PC-3 (cell line): ENCODE measurements at regions of chr7 and their contacts with region 1.

Region 1: DNA sequence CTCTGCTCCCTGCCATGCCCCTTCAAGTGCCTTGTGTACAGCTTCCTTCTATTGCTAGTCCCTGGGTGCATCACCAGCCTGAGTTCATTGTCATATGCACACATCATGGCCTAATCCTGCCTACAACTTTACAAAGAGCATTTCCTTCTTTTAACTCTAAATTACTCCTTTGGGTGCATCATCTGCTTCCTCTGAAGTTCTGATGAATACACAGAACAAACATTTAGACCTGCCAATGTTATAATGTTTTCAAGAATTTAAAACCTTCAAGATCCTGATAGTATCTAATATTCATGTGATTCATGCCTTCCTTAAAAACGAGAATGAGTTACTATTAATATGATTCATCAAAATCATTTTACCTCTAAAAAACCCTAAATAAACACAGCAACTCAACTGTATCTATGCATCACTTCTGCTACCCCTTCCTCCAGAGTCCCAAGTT is 357.1 kb downstream of the MAGI2 start:
- DNase-seq: peak; percentile 89
- ATAC-seq: peak; percentile 97
- H3K4me3 ChIP-seq: no peak overlapping the region
- H3K27ac ChIP-seq: peak overlapping the region; percentile 87
- H3K4me1 ChIP-seq: peaks cover 21% of the 10 kb centered on the region
- H3K27me3 ChIP-seq: no peaks in the 10 kb centered on the region
- CTCF ChIP-seq: no peak

Region 2: GRCh38 chr7:78779788-78780187 is 316.6 kb before region 1 on chr7:
- CTCF ChIA-PET with region 1: no interaction called
- POLR2A ChIA-PET with region 1: no interaction called
- intact Hi-C with region 1: no loop called
- DNase-seq: no peak
- ATAC-seq: no peak
- H3K4me3 ChIP-seq: no peak overlapping the region
- H3K27ac ChIP-seq: no peak overlapping the region
- H3K4me1 ChIP-seq: peaks cover 7% of the 10 kb centered on the region
- H3K27me3 ChIP-seq: peaks cover 11% of the 10 kb centered on the region; the same call in 1 of the 2 replicates
- CTCF ChIP-seq: peak; percentile 44

Region 3: GRCh38 chr7:78959477-78959876 is 136.9 kb before region 1 on chr7:
- CTCF ChIA-PET with region 1: no interaction called
- POLR2A ChIA-PET with region 1: no interaction called
- intact Hi-C with region 1: loop called (anchors 1 kb)
- DNase-seq: peak; percentile 92
- ATAC-seq: peak; percentile 87
- H3K4me3 ChIP-seq: no peak overlapping the region
- H3K27ac ChIP-seq: peak overlapping the region; percentile 86
- H3K4me1 ChIP-seq: peaks cover 38% of the 10 kb centered on the region
- H3K27me3 ChIP-seq: no peaks in the 10 kb centered on the region
- CTCF ChIP-seq: no peak

Region 4: DNA sequence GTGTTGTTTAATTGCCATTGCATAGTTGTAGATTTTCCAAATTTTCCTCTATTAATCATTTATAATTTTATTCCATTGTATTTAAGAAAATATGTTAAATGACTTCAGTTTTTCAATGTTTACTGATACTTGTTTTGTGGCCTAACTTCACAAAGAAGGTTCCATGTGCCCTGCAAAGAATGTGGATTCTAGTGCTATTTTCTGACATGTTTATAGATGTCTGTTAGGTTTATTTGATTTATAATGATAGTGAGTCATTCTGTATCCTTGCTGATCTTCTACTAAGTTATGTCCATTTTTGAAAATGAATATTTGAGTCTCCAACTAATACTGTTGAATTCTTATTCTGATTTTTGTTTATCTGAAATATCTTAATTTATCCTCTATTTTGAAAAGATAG is 12.0 kb before region 1 on chr7:
- CTCF ChIA-PET with region 1: no interaction called
- POLR2A ChIA-PET with region 1: no interaction called
- intact Hi-C with region 1: loop called (anchors 1 kb)
- DNase-seq: peak; percentile 54
- ATAC-seq: peak; percentile 89
- H3K4me3 ChIP-seq: no peak overlapping the region
- H3K27ac ChIP-seq: no peak overlapping the region
- H3K4me1 ChIP-seq: peaks cover 12% of the 10 kb centered on the region
- H3K27me3 ChIP-seq: no peaks in the 10 kb centered on the region
- CTCF ChIP-seq: no peak

Region 5: DNA sequence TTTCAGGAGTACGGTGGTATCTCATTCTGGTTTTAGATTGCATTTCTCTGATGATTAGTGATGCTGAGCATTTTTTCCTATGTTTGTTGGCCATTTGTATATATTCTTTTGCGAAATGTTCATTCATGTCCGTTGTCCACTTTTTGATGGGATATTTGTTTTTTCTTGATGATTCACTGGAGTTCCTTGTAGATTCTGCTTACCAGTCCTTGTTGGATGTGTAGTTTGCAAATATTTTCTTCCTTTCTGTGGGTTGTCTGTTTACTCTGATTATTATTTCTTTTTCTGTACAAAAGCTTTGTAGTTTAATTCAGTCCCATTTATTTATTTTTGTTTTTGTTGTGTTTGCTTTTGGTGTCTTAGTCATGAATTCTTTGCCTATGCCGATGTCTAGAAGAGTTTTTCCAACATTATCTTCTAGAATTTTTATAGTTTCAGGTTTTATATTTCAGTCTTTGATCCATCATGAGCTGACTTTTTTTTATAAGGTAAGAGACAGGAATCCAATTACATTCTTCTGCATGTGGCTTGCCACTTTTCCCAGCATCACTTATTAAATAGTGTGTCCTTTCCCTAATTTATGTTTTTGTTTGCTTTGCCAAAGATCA is 36.6 kb after region 1 on chr7:
- CTCF ChIA-PET with region 1: no interaction called
- POLR2A ChIA-PET with region 1: no interaction called
- intact Hi-C with region 1: loop called (anchors 1 kb)
- DNase-seq: peak; percentile 76
- ATAC-seq: peak; percentile 93
- H3K4me3 ChIP-seq: no peak overlapping the region
- H3K27ac ChIP-seq: peak overlapping the region; percentile 33
- H3K4me1 ChIP-seq: peaks cover 19% of the 10 kb centered on the region
- H3K27me3 ChIP-seq: no peaks in the 10 kb centered on the region
- CTCF ChIP-seq: no peak

Region 6: DNA sequence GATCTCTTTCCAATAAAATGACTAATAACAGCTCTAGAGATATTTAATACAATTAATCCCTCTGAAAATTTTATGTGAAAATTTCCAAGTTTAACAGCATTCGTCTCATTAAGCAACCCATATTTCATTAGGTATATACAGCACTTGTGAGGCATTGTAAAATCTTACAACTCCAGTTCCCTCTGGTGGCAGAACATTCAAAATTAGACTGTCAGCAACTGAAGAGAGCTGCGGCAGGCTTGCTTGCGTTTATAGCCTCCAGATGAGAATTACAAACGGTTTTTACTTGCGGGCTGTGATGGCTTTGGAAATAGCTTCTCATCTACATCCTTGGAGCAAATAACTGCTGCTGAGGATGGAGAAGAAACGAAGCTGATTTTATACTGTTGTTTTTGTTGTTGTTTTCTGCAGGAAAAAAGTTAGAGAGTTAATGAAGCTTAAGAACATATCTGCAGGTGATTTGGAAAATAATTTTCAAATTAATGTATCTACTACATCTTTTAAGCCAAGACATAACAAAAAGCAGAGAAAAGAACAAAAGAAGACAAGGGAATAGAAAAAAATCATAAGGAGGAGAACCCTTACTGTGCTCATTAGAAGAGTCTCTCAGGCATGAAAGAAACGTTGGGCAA is 185.8 kb after region 1 on chr7:
- CTCF ChIA-PET with region 1: no interaction called
- POLR2A ChIA-PET with region 1: no interaction called
- intact Hi-C with region 1: loop called (anchors 5 kb)
- DNase-seq: peak; percentile 71
- ATAC-seq: peak; percentile 70
- H3K4me3 ChIP-seq: peak overlapping the region; percentile 10
- H3K27ac ChIP-seq: peak overlapping the region; percentile 67
- H3K4me1 ChIP-seq: peaks cover 45% of the 10 kb centered on the region
- H3K27me3 ChIP-seq: no peaks in the 10 kb centered on the region
- CTCF ChIP-seq: peak; percentile 62

Region 7: DNA sequence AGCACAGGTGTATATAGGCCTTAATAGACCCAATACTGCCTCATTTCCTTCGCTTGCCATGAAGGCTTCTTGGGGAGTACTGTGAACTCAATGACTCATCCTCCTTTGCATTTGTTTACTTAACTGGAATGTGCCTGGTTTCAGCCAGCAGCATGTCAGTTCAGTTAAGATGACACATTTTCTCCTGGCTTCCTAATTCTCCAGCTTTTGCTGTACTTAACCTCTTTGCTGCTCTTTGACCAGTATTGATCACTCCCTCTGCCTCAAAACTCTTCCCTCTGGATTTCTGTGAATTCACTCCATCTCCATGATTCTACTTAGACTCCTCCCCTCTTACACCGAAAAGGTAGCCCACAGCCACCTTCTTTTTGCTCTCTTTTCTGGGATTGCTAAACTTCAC is 221.3 kb after region 1 on chr7:
- CTCF ChIA-PET with region 1: no interaction called
- POLR2A ChIA-PET with region 1: no interaction called
- intact Hi-C with region 1: no loop called
- DNase-seq: peak; percentile 92
- ATAC-seq: peak; percentile 100
- H3K4me3 ChIP-seq: no peak overlapping the region
- H3K27ac ChIP-seq: peak overlapping the region; percentile 64
- H3K4me1 ChIP-seq: peaks cover 14% of the 10 kb centered on the region
- H3K27me3 ChIP-seq: no peaks in the 10 kb centered on the region
- CTCF ChIP-seq: no peak